Breast epithelium (tissue), 4 donors: ENCODE measurements at regions of chr4 and their contacts with region 1.

Region 1: GRCh38 chr4:40409835-40410234 is 74.7 kb downstream of the CHRNA9 start:
- DNase-seq: no peak
- H3K4me3 ChIP-seq: no peak overlapping the region
- H3K27ac ChIP-seq: no peak overlapping the region
- H3K4me1 ChIP-seq: no peaks in the 10 kb centered on the region
- H3K27me3 ChIP-seq: no peaks in the 10 kb centered on the region
- CTCF ChIP-seq: no peak
- POLR2A ChIP-seq: no peak

Region 2: GRCh38 chr4:41092128-41092527 is 682.3 kb after region 1 on chr4:
- intact Hi-C with region 1: loop called (anchors 5 kb)
- DNase-seq: no peak
- H3K4me3 ChIP-seq: no peak overlapping the region
- H3K27ac ChIP-seq: no peak overlapping the region
- H3K4me1 ChIP-seq: no peaks in the 10 kb centered on the region
- H3K27me3 ChIP-seq: no peaks in the 10 kb centered on the region
- CTCF ChIP-seq: no peak
- POLR2A ChIP-seq: no peak